SK-N-SH (cell line): ENCODE measurements at regions of chr5 and their contacts with region 1.

Region 1: DNA sequence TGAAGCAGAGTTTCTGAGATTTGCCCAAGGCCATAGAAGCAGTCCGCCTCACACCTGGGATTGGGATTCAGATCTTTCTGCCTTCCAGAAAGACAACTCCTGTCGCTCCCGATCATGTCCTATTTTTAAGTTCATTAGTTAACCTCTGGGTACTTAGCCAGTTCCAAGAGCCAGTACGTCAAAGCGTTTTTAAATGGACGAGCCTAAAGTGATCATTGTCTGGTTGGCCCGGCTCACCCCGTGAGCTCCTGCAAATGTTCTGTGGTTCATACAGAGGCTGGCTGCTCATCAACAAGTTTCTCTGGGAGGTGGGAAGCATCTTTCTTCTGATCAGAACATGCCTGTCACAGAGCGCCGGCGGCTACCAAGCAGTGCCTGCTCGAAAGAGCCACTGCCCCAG is 554.5 kb upstream of the WWC1 start:
- DNase-seq: no peak
- H3K4me3 ChIP-seq: no peak overlapping the region
- H3K27ac ChIP-seq: no peak overlapping the region
- H3K4me1 ChIP-seq: peaks cover 0 to 9% of the 10 kb centered on the region in 2 experiments; a peak in 1 of 4 replicates
- H3K27me3 ChIP-seq: no peaks in the 10 kb centered on the region
- CTCF ChIP-seq: no peak
- EP300 ChIP-seq: no peak
- RAD21 ChIP-seq: no peak

Region 2: GRCh38 chr5:167723254-167723871 is 13.6 kb before region 1 on chr5:
- CTCF ChIA-PET with region 1: interaction called, 10 read pairs
- POLR2A ChIA-PET with region 1: no interaction called
- DNase-seq: peak; percentile 74
- H3K4me3 ChIP-seq: peak overlapping the region in 1 of 2 experiments; percentile 17; a peak in 1 of 4 replicates
- H3K27ac ChIP-seq: no peak overlapping the region
- H3K4me1 ChIP-seq: peaks cover 0 to 4% of the 10 kb centered on the region in 2 experiments; a peak in 2 of 4 replicates
- H3K27me3 ChIP-seq: no peaks in the 10 kb centered on the region
- CTCF ChIP-seq: peak; percentile 90
- EP300 ChIP-seq: no peak
- RAD21 ChIP-seq: peak; percentile 83